ENCODE measurements at regions of chr20 and their contacts with region 1.

Region 1: GRCh38 chr20:46757754-46758678 is 48.6 kb downstream of the SLC2A10 start:
- DNase-seq: no peak
- H3K4me3 ChIP-seq: no peak overlapping the region
- H3K27ac ChIP-seq: no peak overlapping the region
- H3K4me1 ChIP-seq: peaks cover 0 to 8% (median 0%) of the 10 kb centered on the region in 3 donors
- H3K27me3 ChIP-seq: peaks cover 0 to 6% (median 0%) of the 10 kb centered on the region in 4 donors
- CTCF ChIP-seq: peak; percentile 87 to 95 (median 92)
- POLR2A ChIP-seq: no peak

Region 2: DNA sequence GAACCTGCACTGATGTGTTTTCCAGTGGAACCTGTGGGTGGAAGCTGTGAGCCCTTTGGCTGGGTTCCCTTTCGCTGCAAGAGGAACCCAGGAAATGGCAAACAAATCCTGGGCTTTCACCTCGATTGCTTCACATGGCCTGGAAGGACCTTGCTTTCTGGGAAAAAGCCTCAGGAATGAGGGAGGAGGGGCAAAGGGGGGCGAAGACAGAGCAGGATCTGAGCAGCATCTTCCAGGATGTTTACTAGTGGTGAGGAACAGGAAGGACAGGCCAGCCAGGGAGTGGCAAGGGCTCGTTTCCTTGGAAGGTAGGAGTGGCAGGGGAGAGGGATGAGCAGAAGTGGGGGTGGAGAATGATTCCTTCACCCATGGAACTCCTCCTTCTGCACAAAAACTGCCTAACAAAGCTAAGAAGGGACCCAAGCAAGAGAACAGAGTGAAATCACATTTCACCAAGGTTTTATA is 42.7 kb before region 1 on chr20:
- intact Hi-C with region 1: no loop called
- DNase-seq: no peak
- H3K4me3 ChIP-seq: no peak overlapping the region
- H3K27ac ChIP-seq: peak overlapping the region in 1 of 4 donors; percentile 28
- H3K4me1 ChIP-seq: peaks cover 3 to 41% (median 15%) of the 10 kb centered on the region in 3 donors
- H3K27me3 ChIP-seq: no peaks in the 10 kb centered on the region
- CTCF ChIP-seq: peak in 3 of 6 experiments; percentile 28 to 40 (median 37)
- POLR2A ChIP-seq: no peak

Region 3: GRCh38 chr20:47146703-47147102 is 388.7 kb after region 1 on chr20:
- intact Hi-C with region 1: loop called (anchors 10 kb)
- DNase-seq: no peak
- H3K4me3 ChIP-seq: no peak overlapping the region
- H3K27ac ChIP-seq: no peak overlapping the region
- H3K4me1 ChIP-seq: no peaks in the 10 kb centered on the region
- H3K27me3 ChIP-seq: no peaks in the 10 kb centered on the region
- CTCF ChIP-seq: no peak
- POLR2A ChIP-seq: no peak